ENCODE measurements at regions of chr22 and their contacts with region 1.

Region 1: GRCh38 chr22:31080848-31081649 is at the start of gene SMTN:
- DNase-seq: peak; percentile 92
- ATAC-seq: peak; percentile 88 to 89
- H3K4me3 ChIP-seq: peak within 1 kb of the TSS; percentile 96
- H3K27ac ChIP-seq: peak within 1 kb of the TSS; percentile 98
- H3K4me1 ChIP-seq: peaks cover 51% of the 10 kb centered on the region
- H3K27me3 ChIP-seq: no peaks in the 10 kb centered on the region
- CTCF ChIP-seq: no peak
- total RNA-seq, gene SMTN: 44.8 TPM

Region 2: GRCh38 chr22:30947816-30948454 is 133.1 kb before region 1 on chr22:
- intact Hi-C with region 1: loop called (anchors 10 kb)
- DNase-seq: no peak
- ATAC-seq: peak; percentile 27 to 58
- H3K4me3 ChIP-seq: no peak overlapping the region
- H3K27ac ChIP-seq: no peak overlapping the region
- H3K4me1 ChIP-seq: peaks cover 12% of the 10 kb centered on the region
- H3K27me3 ChIP-seq: no peaks in the 10 kb centered on the region
- CTCF ChIP-seq: peak; percentile 51

Region 3: GRCh38 chr22:31127181-31127772 is 46.2 kb after region 1 on chr22:
- intact Hi-C with region 1: no loop called
- DNase-seq: no peak
- ATAC-seq: no peak
- H3K4me3 ChIP-seq: no peak overlapping the region
- H3K27ac ChIP-seq: no peak overlapping the region
- H3K4me1 ChIP-seq: peaks cover 5% of the 10 kb centered on the region
- H3K27me3 ChIP-seq: no peaks in the 10 kb centered on the region
- CTCF ChIP-seq: no peak

Region 4: DNA sequence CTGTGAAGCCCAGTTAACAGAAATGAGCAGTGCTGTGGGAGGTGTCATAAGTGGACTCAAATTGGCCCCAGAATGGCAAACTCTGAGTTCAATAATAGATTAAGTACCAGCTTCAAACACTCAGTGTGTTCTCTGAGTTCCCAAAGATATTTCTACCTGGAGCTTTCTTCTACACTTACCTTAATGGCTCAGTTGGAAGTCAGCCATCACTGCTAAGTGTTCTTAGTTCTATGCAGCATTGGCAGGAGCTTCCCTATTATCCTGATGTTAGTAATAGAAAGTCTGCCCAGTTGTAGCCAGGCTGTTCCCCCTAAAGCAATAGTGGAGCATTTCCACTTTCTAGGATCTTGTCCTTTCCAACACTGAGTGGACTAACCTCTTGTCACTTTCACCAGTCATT is 221.0 kb after region 1 on chr22:
- intact Hi-C with region 1: no loop called
- DNase-seq: no peak
- ATAC-seq: peak in 1 of 2 donors; percentile 43
- H3K4me3 ChIP-seq: no peak overlapping the region
- H3K27ac ChIP-seq: no peak overlapping the region
- H3K4me1 ChIP-seq: no peaks in the 10 kb centered on the region
- H3K27me3 ChIP-seq: no peaks in the 10 kb centered on the region
- CTCF ChIP-seq: no peak

Region 5: DNA sequence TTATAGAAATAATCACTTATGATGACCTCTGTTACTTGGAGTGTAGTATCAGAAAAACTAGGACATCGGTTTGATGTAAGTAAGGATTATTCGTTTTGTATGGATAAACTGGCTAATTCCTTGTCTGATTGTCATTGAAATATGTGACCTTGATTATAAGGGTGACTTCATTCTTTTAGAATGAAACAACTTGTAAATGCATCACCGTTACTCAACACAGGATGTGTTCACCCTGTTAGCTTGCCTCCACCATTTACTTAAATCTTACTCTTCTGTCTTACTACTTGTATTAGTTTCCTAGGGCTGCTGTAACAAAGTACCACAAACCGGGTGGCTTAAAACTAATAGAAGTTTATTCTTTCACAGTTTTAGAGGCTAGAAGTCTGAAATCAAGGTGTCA is 423.2 kb after region 1 on chr22:
- intact Hi-C with region 1: no loop called
- DNase-seq: no peak
- ATAC-seq: no peak
- H3K4me3 ChIP-seq: no peak overlapping the region
- H3K27ac ChIP-seq: no peak overlapping the region
- H3K4me1 ChIP-seq: peaks cover 3% of the 10 kb centered on the region
- H3K27me3 ChIP-seq: no peaks in the 10 kb centered on the region
- CTCF ChIP-seq: no peak